ENCODE measurements at regions of chr11 and their contacts with region 1.

Region 1: DNA sequence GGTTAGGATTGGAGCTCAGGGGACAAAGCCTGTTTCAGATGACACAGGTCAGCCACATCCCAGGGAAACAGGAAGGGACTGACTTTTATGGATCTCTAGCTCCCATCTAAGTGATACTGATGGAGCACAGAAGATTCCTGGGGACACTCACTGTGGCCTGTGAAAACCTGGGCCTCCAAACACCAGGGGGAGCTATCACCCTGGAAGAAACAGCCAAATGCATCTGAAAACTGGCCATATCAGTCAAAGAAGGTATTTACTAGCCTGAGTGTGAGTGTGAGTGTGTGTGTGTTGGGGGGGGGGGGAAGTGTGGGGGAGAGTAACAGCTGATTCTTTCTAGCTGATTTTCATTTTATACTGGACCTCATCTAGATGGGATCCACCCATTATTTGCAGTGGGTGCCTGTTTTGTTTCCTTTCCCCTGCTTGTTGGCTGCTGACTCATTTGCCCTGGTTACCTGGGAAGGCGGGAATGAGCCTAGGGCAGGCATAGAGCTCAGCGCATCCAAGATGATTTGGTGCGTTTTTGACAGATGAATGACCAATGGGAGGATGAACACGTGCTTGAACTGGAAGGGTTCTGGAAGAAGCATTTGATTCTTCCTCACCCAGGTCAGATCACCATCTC is 284.0 kb downstream of the KIRREL3 start:
- DNase-seq: no peak
- H3K4me3 ChIP-seq: no peak overlapping the region
- CTCF ChIP-seq: peak; percentile 67

Region 2: GRCh38 chr11:126732981-126733380 is 16.4 kb after region 1 on chr11:
- CTCF ChIA-PET with region 1: interaction called, 30 read pairs
- POLR2A ChIA-PET with region 1: no interaction called
- DNase-seq: no peak
- H3K4me3 ChIP-seq: no peak overlapping the region
- CTCF ChIP-seq: no peak

Region 3: DNA sequence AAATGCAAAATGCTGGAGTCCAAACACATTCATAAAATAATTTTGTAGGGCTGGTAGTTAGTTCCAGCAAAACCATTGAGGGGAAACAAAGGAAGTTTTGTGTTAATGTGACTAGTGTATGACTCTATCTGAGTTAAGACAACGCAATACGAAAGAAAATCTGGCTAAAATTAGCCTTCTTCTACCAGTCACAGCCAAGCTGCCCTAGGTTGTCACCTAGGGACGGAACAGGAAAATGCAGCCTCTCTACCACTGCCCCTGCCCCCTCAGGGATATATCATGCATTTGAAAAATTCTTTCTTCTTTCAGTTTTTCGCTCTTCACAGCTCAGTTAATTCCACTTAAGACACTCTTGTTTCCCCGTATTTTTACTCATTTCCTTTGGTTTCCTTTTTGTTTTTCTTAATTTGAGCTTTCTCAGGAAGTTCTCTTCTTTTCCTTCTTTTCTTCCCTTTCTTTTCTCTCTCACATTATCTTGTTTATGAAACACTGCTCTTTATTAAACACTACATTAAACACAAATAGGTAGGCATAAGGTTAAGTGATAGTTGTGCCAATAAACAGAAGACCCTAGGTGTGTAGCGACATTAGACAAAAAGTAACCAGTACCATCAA is 253.4 kb after region 1 on chr11:
- CTCF ChIA-PET with region 1: interaction called, 21 read pairs
- POLR2A ChIA-PET with region 1: no interaction called
- DNase-seq: no peak
- H3K4me3 ChIP-seq: no peak overlapping the region
- CTCF ChIP-seq: peak; percentile 80

Region 4: DNA sequence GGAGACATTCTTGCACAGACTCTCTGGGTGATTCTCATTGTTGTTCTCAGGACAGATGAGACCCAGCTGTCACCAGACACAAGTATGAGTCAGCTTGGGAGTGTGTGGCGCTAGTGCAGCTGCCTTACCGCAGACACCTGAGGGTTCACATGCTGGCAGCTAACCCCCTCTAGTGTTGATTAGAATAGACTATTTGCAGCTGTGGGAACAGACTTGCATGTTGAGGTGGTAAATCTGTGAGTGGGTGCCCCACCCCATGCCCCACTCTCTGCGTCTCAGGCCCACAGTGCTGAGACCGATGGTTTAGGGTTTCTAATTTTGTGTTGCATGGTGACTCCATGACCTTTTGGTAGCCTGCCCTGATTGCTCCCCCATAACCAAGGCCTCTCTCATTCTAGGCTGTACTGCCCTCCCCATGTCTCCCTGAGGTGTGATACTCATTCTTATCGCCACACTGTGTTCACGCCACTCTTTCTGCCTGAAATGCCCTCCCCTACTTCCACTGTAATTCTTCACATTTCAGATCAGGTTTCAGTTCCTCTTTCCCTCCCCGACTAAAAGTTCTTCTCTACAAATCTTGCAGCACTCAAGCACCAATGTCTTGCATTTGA is 357.7 kb after region 1 on chr11:
- CTCF ChIA-PET with region 1: interaction called, 16 read pairs
- POLR2A ChIA-PET with region 1: no interaction called
- DNase-seq: peak; percentile 29
- H3K4me3 ChIP-seq: no peak overlapping the region
- CTCF ChIP-seq: peak; percentile 73

Measured in AG04449 (cell line).